Motor neuron (in vitro differentiated cells): ENCODE measurements at regions of chr2 and their contacts with region 1.

Region 1: DNA sequence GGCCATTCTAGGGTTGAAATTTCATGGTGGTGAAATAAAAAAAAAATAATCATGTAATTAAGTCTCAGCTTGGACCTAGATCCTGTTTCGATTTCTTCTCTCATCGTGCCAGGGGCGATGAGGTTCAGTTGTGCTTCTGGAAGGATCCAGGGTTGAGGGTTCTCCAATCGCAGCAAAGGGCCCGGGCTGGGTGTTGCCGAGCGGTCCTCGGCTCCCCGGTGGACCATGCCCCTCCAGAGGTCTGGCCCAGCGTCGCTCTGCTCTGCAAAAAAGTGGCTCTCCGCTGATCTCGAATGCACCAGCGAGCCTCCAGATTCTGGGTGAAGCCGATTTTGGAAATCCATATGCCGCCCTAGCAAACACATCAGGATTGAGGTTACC is 39.0 kb downstream of the EN1 start:
- ATAC-seq: peak in 7 of 8 experiments; percentile 27 to 53 (median 45)
- H3K4me3 ChIP-seq: no peak overlapping the region
- H3K27ac ChIP-seq: peak overlapping the region in 1 of 2 donors; percentile 45
- H3K4me1 ChIP-seq: peaks cover 25% of the 10 kb centered on the region in 2 donors

Region 2: DNA sequence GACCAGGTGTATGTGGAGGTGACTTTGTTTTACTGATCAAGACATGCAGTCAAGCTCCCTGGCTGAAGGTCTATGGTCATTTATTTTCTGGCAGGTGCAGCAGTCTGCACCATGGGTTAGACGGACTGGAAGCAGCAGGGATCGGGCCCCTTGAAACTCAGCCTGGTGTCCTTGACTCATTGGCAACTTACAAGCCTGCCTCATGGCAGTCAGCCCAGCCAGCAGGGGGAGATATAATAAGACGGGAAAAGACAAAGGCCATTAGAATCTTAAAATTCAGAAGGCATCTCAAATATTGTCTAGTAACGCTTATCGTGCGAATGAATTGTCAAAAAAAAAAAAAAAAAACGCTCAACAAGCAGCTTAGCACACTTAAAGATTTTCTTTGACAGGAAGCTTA is 269.1 kb before region 1 on chr2:
- in situ Hi-C with region 1: loop called in 1 of 9 experiments (anchors 25 kb)
- ATAC-seq: no peak
- H3K4me3 ChIP-seq: no peak overlapping the region
- H3K27ac ChIP-seq: no peak overlapping the region
- H3K4me1 ChIP-seq: no peaks in the 10 kb centered on the region